AG04450 (cell line): ENCODE measurements at regions of chr15 and their contacts with region 1.

Region 1: GRCh38 chr15:68650901-68651709 is 72.3 kb downstream of the CORO2B start:
- DNase-seq: no peak
- H3K4me3 ChIP-seq: no peak overlapping the region
- H3K27ac ChIP-seq: no peak overlapping the region
- H3K27me3 ChIP-seq: no peaks in the 10 kb centered on the region
- CTCF ChIP-seq: peak; percentile 76

Region 2: GRCh38 chr15:68559345-68560310 is 91.5 kb before region 1 on chr15:
- CTCF ChIA-PET with region 1: interaction called, 11 read pairs
- POLR2A ChIA-PET with region 1: no interaction called
- DNase-seq: peak; percentile 37
- H3K4me3 ChIP-seq: peak overlapping the region; percentile 65
- H3K27ac ChIP-seq: no peak overlapping the region
- H3K27me3 ChIP-seq: peaks cover 8% of the 10 kb centered on the region
- CTCF ChIP-seq: peak; percentile 89

Region 3: DNA sequence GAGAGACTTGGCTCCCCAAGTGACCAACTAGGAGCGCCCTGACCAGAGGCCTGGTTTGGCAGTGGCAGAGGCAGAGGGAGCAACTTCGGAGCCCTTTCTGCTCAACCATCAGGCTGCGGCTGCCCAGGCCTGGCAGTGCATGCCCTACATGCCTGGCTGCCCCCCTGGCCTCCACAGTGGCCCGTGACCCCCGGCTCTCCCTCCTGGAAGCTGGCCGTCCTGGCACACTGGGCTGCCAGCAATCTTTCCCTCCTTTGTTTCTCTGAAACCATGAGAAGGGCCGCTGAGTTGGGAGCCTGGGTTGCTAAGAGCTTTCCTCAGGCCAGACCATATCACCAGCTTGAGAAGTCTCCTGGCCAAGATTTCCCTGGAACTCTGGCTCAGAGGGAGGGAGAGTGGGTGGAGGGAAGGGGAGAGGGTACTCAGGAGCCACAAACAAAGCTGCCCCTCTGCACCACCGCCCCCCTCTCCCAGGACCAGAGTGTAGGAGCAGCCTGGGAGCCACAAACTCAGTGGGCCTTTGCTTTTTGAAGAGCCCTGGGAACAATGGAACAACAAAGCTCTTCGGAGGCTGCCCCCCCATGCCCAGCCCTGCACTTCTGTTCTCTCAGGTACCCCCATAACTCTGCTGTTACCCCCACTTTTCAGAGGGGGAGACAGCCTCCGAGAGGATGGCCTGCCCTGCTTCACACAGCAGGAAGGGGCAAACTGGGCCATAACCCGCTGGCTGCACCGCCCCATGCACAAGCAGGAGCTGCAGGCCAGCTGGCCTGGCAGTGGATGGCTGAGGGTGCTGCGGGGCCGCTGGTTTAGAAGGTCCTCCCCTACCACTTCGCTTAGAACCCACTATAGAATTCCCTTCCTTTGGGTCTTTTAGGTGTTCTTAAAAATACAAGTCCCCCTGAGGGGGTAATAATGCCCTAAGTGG is 61.1 kb before region 1 on chr15:
- CTCF ChIA-PET with region 1: no interaction called
- POLR2A ChIA-PET with region 1: no interaction called
- DNase-seq: no peak
- H3K4me3 ChIP-seq: no peak overlapping the region
- H3K27ac ChIP-seq: no peak overlapping the region
- H3K27me3 ChIP-seq: no peaks in the 10 kb centered on the region
- CTCF ChIP-seq: no peak

Region 4: GRCh38 chr15:68666120-68666811 is 15.2 kb after region 1 on chr15:
- CTCF ChIA-PET with region 1: interaction called, 13 read pairs
- POLR2A ChIA-PET with region 1: no interaction called
- DNase-seq: no peak
- H3K4me3 ChIP-seq: no peak overlapping the region
- H3K27ac ChIP-seq: no peak overlapping the region
- H3K27me3 ChIP-seq: no peaks in the 10 kb centered on the region
- CTCF ChIP-seq: no peak